ENCODE measurements at regions of chr5 and their contacts with region 1.

Region 1: DNA sequence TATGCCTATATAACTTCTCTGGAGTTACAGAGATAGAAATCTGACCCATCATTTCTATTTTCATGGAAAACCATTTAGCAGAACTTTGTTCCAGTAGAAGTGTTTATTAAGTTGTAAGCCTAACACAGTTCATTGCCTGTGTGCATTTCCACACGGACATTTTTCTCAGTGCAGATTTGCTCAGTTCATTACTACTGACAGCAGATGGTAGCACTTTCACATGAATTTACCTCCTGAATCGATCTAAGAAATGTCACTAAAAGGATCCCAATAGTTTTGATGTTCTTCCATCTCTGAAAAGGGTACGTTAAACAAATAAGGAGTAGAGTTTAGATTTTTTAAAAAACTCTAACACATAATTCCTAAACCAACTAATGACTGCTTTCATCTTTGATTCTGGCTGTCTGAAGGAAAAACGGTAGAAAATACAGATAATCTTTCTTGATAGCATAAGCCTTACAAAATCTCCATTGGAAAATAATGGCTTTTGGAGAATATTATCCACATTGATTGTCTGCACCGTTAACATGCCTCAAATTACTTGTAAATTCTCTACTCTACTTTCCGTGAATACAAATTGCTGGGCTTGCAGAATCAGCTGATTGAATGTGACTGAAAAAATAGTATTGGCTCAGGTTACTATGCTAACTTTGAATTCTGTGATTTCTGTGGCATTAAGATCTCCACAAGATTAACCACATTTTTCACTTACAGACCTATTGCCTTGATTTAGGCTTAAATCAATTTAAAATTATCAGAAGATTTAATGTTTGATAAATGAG is 33.1 kb downstream of the RPS23 start:
- H3K4me3 ChIP-seq: no peak overlapping the region
- H3K27ac ChIP-seq: no peak overlapping the region
- H3K4me1 ChIP-seq: no peaks in the 10 kb centered on the region
- CTCF ChIP-seq: no peak

Region 2: DNA sequence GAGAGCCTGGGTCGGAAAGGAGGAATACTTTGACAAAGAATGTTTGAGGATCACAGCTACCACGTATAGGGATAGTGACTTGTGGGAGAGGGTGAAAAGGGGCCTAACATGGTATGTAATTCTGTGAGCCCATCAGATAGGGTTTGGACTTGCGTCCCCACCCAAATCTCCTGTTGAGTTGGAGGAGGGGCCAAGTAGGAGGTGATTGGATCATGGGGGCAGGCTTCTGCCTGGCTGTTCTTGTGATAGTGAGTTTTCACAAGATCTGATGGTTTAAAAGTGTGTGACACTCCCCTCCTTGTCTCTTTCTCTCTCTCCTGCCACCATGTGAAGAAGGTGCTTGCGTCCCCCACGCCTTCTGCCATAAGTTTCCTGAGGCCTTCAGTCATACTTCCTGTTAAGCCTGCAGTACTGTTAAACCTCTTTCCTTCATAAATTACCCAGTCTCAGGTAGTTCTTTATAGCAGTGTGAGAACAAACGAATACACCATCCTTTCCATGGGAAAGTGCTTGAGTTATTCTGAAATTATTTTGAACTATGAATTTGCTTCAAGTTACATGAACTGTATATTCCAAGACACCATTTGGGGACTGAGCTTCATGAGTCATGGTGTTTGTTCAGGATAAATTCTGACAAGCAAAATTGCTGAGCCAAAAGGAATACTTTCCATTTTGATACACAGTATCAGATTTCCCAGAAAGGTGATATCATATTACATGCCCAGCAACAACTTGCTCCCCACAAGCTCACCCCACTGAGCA is 425.3 kb before region 1 on chr5:
- CTCF ChIA-PET with region 1: no interaction called
- POLR2A ChIA-PET with region 1: no interaction called
- H3K4me3 ChIP-seq: no peak overlapping the region
- H3K27ac ChIP-seq: no peak overlapping the region
- H3K4me1 ChIP-seq: no peaks in the 10 kb centered on the region
- CTCF ChIP-seq: no peak

Region 3: GRCh38 chr5:82183828-82184227 is 61.2 kb before region 1 on chr5:
- CTCF ChIA-PET with region 1: no interaction called
- POLR2A ChIA-PET with region 1: no interaction called
- H3K4me3 ChIP-seq: no peak overlapping the region
- H3K27ac ChIP-seq: no peak overlapping the region
- H3K4me1 ChIP-seq: no peaks in the 10 kb centered on the region
- CTCF ChIP-seq: no peak

Region 4: DNA sequence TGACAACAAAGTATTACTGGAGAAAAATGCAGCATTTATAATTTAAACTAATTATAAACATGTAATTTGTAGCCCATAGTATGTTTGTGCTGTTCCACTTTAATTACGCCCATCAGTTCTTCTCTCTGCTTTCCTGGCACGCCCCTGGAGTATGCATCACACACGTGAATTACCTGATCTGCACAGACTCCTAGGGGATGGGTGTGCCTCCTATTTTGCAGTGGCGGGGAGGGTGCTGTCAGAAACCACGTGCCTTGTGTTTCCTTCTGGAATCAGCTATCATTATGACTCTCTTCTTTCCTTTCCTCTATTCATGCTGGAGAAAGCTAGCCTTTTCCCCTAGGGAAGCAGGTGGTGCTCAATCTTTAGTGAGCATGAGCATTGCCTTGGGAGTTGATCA is 10.2 kb before region 1 on chr5:
- CTCF ChIA-PET with region 1: no interaction called
- POLR2A ChIA-PET with region 1: no interaction called
- H3K4me3 ChIP-seq: no peak overlapping the region
- H3K27ac ChIP-seq: no peak overlapping the region
- H3K4me1 ChIP-seq: no peaks in the 10 kb centered on the region; the same call in 1 of the 2 replicates
- CTCF ChIP-seq: no peak

Region 5: GRCh38 chr5:82259172-82259800 is 14.2 kb after region 1 on chr5:
- CTCF ChIA-PET with region 1: interaction called, 10 read pairs
- POLR2A ChIA-PET with region 1: no interaction called
- H3K4me3 ChIP-seq: no peak overlapping the region
- H3K27ac ChIP-seq: no peak overlapping the region
- H3K4me1 ChIP-seq: no peaks in the 10 kb centered on the region
- CTCF ChIP-seq: no peak

Region 6: GRCh38 chr5:82413302-82414040 is 168.4 kb after region 1 on chr5:
- CTCF ChIA-PET with region 1: no interaction called
- POLR2A ChIA-PET with region 1: no interaction called
- H3K4me3 ChIP-seq: no peak overlapping the region
- H3K27ac ChIP-seq: no peak overlapping the region
- H3K4me1 ChIP-seq: no peaks in the 10 kb centered on the region
- CTCF ChIP-seq: no peak